ENCODE measurements at regions of chr1 and their contacts with region 1.

Region 1: DNA sequence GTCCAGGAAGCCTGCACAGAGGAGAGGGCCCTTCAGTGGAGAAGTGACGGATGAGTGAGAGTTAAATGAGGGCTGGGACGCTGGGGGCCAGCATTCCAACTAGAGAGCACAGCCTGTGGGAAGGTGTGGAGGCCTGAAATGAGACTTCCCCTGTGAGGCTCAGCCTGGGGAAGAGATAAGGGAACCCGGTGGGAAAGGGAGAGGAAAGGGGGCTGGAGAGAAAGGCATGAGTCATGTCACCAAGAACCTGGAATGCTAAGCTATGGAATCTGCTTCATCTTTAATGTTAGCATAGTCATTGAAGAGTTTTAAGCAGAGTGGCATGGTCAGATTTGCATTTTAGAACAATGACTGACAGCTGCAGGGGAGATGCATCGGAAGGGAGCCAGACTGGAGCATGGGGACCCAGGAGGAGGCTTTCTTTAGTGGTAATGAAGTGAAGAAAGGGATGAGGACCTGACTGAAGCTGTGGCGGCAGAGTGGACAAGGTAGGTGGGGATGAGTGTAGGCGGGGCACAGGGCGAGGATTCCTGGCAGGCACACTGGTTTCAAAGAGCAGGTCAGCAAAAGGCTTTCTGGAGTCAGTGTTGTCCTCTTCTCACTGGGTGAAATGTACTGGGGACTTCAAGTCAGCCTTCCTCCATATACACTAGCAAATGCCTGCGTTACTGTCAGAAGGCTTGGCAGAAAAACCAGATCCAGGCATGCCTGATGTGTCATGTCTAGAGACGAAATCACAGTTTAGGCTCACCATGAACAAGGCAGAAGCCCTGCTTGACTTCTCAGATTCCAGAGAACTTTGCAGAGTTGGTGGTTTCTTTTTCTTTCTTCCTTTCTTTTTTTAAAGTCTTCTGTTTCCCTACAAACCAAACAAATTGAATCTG is 8.0 kb downstream of the RGL1 start:
- DNase-seq: no peak
- H3K4me3 ChIP-seq: peak overlapping the region in 2 of 3 donors; percentile 4 to 17
- H3K27ac ChIP-seq: peak overlapping the region in 1 of 2 donors; percentile 60
- H3K4me1 ChIP-seq: no peaks in the 10 kb centered on the region
- H3K27me3 ChIP-seq: no peaks in the 10 kb centered on the region
- CTCF ChIP-seq: no peak
- POLR2A ChIP-seq: no peak

Region 2: GRCh38 chr1:183689770-183690204 is 123.1 kb before region 1 on chr1:
- intact Hi-C with region 1: loop called (anchors 5 kb)
- DNase-seq: no peak
- H3K4me3 ChIP-seq: no peak overlapping the region
- H3K27ac ChIP-seq: no peak overlapping the region
- H3K4me1 ChIP-seq: no peaks in the 10 kb centered on the region
- H3K27me3 ChIP-seq: no peaks in the 10 kb centered on the region
- CTCF ChIP-seq: no peak
- POLR2A ChIP-seq: no peak

Region 3: DNA sequence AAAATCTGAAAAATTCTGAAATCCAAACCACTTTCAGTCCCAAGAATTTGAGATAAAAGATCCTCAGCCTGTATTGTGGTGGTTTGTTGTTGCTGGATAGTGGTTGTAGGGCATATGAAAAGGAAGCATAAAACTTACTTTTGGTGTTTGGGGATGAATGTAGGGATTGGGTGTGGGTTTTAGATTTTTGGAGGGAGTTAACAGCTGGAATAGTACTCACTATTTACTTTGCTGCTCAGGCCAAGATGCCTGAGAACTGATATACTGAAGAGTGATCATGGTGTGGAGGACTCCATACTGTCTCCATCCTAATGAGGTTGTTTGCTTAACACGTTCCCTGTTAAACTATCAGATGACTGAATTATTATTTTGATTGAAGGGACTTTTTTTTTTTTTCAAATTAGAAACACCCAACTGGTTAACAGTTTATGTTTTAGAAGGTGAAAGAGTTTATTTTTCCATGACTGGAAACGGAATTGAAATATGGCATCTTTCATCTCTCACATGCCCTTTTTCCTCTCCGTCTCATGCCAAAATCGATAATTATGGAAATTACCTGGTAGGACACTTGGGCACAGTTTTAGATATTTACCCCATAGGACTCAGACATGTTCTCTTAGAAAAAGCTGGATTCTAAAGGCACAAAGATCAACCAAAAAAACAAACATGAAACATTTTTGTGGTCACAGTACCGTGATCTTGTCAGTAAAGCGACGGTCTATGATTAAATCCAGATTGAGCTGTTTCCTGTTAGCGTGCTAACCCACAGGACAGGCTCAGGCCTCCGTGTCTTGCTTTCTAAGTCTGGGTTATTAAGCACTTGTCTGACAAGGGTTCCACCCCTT is 29.2 kb after region 1 on chr1:
- intact Hi-C with region 1: no loop called
- DNase-seq: peak in 1 of 2 donors; percentile 33
- H3K4me3 ChIP-seq: peak overlapping the region in 2 of 3 donors; percentile 10 to 29
- H3K27ac ChIP-seq: peak overlapping the region; percentile 59 to 62
- H3K4me1 ChIP-seq: peaks cover 0 to 5% of the 10 kb centered on the region in 2 donors
- H3K27me3 ChIP-seq: no peaks in the 10 kb centered on the region
- CTCF ChIP-seq: no peak
- POLR2A ChIP-seq: no peak

Measured in breast epithelium (tissue), 4 donors.